Ovary (tissue), 10 donors: ENCODE measurements at regions of chr3 and their contacts with region 1.

Region 1: GRCh38 chr3:136752422-136753325 is 496 bp upstream of the STAG1 start:
- DNase-seq: peak; percentile 99 to 100 (median 100)
- H3K4me3 ChIP-seq: peak overlapping the region; percentile 75
- H3K27ac ChIP-seq: peak overlapping the region; percentile 90 to 100
- H3K4me1 ChIP-seq: peaks cover 4% of the 10 kb centered on the region
- H3K27me3 ChIP-seq: no peaks in the 10 kb centered on the region
- CTCF ChIP-seq: peak in 1 of 3 donors; percentile 97
- EP300 ChIP-seq: peak; percentile 54
- POLR2A ChIP-seq: peak; percentile 73

Region 2: DNA sequence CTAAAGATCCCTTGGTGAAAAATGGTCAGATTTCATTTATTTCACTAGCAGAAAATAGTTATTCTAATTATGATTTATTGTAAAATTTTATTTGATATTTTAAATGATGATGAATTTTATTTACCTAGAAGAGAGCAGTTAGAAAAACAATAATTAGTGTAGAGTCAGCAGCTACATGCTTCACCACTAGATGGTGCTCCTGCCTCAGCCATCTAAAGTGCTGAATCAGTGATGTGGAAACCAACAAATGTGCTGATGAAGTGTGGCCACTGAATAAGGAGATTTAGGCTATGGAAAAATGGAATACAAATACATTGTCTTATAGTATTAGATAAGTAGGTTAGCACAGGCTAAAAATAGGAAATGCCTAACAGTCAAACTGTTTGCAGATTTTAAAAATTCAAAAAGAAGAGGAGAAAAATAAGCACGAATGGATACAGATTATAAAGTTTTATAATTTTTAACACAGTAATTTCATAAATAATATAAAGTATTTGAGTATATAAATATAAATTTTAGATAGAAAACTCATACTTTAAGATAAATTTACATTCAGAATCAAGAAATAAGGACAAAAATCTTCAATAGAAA is 677.4 kb before region 1 on chr3:
- intact Hi-C with region 1: loop called in 3 of 4 experiments (anchors 5 kb)
- DNase-seq: peak; percentile 65 to 83 (median 74)
- H3K4me3 ChIP-seq: no peak overlapping the region
- H3K27ac ChIP-seq: no peak overlapping the region
- H3K4me1 ChIP-seq: peaks cover 2% of the 10 kb centered on the region
- H3K27me3 ChIP-seq: no peaks in the 10 kb centered on the region
- CTCF ChIP-seq: peak; percentile 69 to 95 (median 94)
- EP300 ChIP-seq: no peak
- POLR2A ChIP-seq: no peak

Region 3: DNA sequence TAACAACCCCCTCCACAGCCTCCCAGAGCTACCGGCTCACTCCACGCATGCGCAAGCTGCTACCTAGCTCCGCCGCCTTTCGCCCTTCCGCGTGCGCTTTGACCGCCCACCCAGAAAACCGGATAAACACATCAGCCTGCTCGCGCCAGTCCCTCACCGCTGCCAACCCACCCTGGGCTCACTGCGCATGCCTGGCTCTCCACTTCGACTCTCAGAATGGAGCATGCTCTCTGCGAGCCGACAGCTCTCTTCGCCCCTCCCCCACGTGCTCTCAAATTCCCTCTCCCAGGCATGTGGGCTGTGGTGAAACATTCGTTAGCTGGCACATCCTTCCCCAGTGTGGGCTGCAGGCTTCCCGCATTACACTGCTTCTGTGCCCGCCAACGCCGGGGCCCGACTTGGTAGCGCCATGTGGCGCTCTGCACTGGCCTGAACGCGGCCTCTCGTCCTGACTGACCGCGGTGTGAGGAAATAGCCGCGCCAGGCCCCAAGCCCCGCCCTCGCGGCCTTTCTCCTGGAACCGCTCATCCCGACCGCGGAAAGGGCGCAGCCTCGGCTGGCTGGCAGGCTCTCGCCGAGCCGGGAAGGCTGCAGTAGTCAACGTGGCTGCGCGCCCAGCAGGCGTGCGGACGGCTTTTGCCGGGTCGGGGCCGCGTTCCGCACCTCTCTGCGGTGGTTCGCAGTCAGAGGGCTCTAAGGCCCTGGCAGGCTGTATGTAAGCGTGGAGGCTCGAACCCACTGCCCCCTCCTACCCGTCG is 556.1 kb before region 1 on chr3:
- intact Hi-C with region 1: loop called in 1 of 4 experiments (anchors 1 kb)
- DNase-seq: peak; percentile 99 to 100 (median 99)
- H3K4me3 ChIP-seq: peak overlapping the region; percentile 92
- H3K27ac ChIP-seq: peak overlapping the region; percentile 99 to 100
- H3K4me1 ChIP-seq: peaks cover 1% of the 10 kb centered on the region
- H3K27me3 ChIP-seq: no peaks in the 10 kb centered on the region
- CTCF ChIP-seq: no peak
- EP300 ChIP-seq: no peak
- POLR2A ChIP-seq: peak; percentile 30

Region 4: DNA sequence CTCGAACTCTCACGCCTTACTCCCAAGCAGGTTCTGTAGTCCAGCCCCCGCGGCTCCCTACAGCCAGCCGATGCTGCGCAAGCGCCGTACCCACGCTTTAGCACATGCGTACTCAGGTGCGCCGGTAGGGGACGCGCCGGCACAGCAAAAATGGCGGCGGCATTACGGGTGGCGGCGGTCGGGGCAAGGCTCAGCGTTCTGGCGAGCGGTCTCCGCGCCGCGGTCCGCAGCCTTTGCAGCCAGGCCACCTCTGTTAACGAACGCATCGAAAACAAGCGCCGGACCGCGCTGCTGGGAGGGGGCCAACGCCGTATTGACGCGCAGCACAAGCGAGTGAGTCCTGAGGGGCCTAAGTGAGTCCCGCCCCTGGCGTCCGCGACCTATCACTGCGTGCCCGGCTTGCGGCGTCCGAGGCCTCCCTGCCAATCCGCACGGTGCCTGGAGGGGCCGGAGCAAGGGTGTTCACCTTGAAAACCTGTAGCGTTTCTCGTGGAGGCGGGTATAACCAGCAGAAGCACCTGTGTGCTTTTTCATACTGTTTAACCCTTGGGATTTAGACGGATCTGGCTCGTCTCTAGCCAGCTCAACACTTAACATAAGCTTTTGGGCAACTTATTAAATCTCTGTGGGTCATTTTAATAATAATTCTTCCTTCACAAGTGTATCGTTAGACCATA is 502.3 kb before region 1 on chr3 and contains the start of gene PCCB:
- intact Hi-C with region 1: loop called in 2 of 4 experiments (anchors 2 kb)
- DNase-seq: peak; percentile 92 to 96 (median 93)
- H3K4me3 ChIP-seq: peak within 1 kb of the TSS; percentile 72
- H3K27ac ChIP-seq: peak within 1 kb of the TSS; percentile 4 to 79
- H3K4me1 ChIP-seq: peaks cover 1% of the 10 kb centered on the region
- H3K27me3 ChIP-seq: no peaks in the 10 kb centered on the region
- CTCF ChIP-seq: peak; percentile 95 to 99 (median 96)
- EP300 ChIP-seq: no peak
- POLR2A ChIP-seq: peak; percentile 63
- total RNA-seq, gene PCCB: 8.2 to 26.5 (median 22.1) TPM

Region 5: GRCh38 chr3:136804813-136805212 is 52.1 kb after region 1 on chr3:
- intact Hi-C with region 1: no loop called
- DNase-seq: no peak
- H3K4me3 ChIP-seq: no peak overlapping the region
- H3K27ac ChIP-seq: no peak overlapping the region
- H3K4me1 ChIP-seq: no peaks in the 10 kb centered on the region
- H3K27me3 ChIP-seq: no peaks in the 10 kb centered on the region
- CTCF ChIP-seq: no peak
- EP300 ChIP-seq: no peak
- POLR2A ChIP-seq: no peak

Region 6: DNA sequence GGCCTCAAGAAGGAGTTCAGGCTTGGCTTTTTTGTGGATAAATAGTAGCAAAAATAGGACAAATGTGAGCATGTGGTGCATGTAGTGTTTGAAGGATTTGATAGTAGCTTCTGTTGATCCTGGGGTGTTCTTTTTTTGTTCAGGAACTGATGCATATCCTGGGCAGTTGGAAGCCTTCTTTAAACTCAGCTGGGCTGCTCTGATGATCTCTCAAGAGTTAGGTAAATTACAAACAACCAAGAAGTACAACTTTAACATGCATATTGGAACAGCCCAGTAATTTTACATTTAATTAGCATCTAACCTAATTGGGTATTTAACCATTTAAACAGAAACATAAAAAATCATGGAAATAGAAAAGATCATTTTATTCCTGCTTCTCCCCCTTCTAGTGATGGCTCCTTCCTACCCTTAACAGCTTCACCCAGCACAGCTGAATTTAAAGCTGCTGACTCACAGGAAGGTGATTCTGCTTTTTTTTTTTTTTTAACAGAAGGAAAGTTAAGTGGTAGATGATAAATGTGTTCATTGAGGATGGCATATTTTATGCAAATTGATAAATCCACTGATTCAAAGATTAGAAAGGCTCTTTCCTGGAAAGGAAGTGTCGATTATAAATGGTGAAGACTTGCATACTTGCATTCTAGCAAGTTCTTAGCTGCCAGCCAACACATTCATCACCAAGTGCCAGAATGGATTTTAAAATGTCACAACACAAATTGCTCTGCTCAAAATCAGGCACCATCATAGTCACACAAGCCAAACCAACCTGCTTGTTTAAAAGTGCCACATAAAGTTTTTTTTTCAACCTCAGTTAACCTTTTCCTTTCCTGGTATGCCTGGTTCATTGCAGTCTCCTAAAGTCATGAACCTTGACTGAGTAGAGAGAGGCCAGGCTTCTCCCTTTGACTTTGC is 86.2 kb after region 1 on chr3:
- intact Hi-C with region 1: no loop called
- DNase-seq: no peak
- H3K4me3 ChIP-seq: no peak overlapping the region
- H3K27ac ChIP-seq: no peak overlapping the region
- H3K4me1 ChIP-seq: no peaks in the 10 kb centered on the region
- H3K27me3 ChIP-seq: no peaks in the 10 kb centered on the region
- CTCF ChIP-seq: no peak
- EP300 ChIP-seq: no peak
- POLR2A ChIP-seq: no peak

Region 7: GRCh38 chr3:136861890-136862616 is 109.4 kb after region 1 on chr3 and contains the start of gene NCK1:
- intact Hi-C with region 1: loop called in 1 of 4 experiments (anchors 5 kb)
- DNase-seq: peak; percentile 95 to 97 (median 95)
- H3K4me3 ChIP-seq: peak within 1 kb of the TSS; percentile 95
- H3K27ac ChIP-seq: peak within 1 kb of the TSS; percentile 83 to 86
- H3K4me1 ChIP-seq: peaks cover 3% of the 10 kb centered on the region
- H3K27me3 ChIP-seq: no peaks in the 10 kb centered on the region
- CTCF ChIP-seq: peak; percentile 10 to 33 (median 23)
- EP300 ChIP-seq: no peak
- POLR2A ChIP-seq: peak; percentile 87
- total RNA-seq, gene NCK1: 35.8 to 49.4 (median 36.2) TPM

Region 8: GRCh38 chr3:137013955-137014688 is 261.4 kb after region 1 on chr3:
- intact Hi-C with region 1: loop called in 3 of 4 experiments (anchors 5 kb)
- DNase-seq: peak; percentile 87 to 94 (median 93)
- H3K4me3 ChIP-seq: peak overlapping the region; percentile 40
- H3K27ac ChIP-seq: peak overlapping the region; percentile 32 to 81
- H3K4me1 ChIP-seq: peaks cover 2% of the 10 kb centered on the region
- H3K27me3 ChIP-seq: no peaks in the 10 kb centered on the region
- CTCF ChIP-seq: peak; percentile 90
- EP300 ChIP-seq: no peak
- POLR2A ChIP-seq: no peak